ENCODE measurements at regions of chr7 and their contacts with region 1.

Region 1: GRCh38 chr7:36440880-36441279 is 51.2 kb downstream of the ANLN start:
- DNase-seq: peak; percentile 36 to 60 (median 57)
- H3K4me3 ChIP-seq: no peak overlapping the region
- H3K27ac ChIP-seq: no peak overlapping the region
- H3K4me1 ChIP-seq: peaks cover 0 to 6% (median 1%) of the 10 kb centered on the region in 4 experiments
- H3K27me3 ChIP-seq: no peaks in the 10 kb centered on the region

Region 2: GRCh38 chr7:36420307-36420706 is 20.6 kb before region 1 on chr7:
- CTCF ChIA-PET with region 1: interaction called, 13 read pairs
- POLR2A ChIA-PET with region 1: no interaction called
- DNase-seq: no peak
- H3K4me3 ChIP-seq: no peak overlapping the region
- H3K27ac ChIP-seq: no peak overlapping the region
- H3K4me1 ChIP-seq: no peaks in the 10 kb centered on the region
- H3K27me3 ChIP-seq: no peaks in the 10 kb centered on the region

Region 3: DNA sequence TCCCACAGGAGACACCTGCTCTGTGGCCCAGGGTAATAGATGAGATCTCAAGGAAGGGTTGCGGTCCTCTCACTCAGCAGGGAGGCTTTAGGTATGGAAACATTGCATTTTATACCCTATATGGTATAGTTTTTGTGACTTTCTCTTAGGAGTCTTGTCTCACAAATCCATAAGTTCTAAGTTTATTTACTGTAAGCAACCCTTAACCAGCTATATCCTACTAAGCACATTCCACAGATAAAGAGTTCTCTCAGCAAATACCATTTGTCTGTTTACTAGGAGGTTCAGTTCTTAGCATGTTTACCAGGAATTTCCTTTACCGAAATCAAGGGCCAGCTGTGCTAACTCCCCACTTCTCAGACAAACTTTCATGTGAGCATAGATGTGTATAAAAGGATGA is 15.7 kb after region 1 on chr7:
- CTCF ChIA-PET with region 1: interaction called, 19 read pairs
- POLR2A ChIA-PET with region 1: no interaction called
- DNase-seq: no peak
- H3K4me3 ChIP-seq: no peak overlapping the region
- H3K27ac ChIP-seq: no peak overlapping the region
- H3K4me1 ChIP-seq: no peaks in the 10 kb centered on the region
- H3K27me3 ChIP-seq: no peaks in the 10 kb centered on the region

Region 4: DNA sequence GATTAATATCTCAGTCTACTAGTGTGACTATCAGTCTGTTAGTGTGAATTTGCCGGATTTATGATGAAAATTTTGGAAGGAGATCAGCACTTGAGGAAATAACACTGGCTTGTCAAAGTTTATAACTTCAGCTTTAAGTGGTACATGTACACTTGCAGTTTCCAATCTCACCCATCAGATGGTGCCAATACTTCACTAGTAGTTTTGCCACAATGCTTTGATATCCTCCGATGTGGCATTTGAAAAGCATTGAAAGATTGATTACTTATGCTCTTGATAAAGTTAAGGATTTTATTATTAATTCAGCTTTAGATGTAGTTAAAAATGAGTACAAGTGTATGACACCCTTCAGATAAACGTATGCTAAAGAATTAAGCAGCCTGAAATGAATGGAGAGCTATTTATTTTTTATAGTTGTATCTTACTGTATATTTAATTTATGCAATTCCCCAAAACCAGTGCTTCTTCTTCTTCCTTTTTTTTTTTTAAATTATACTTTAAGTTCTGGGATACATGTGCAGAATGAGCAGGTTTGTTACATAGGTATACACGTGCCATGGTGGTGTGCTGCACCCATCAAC is 47.0 kb after region 1 on chr7:
- CTCF ChIA-PET with region 1: interaction called, 29 read pairs
- POLR2A ChIA-PET with region 1: no interaction called
- DNase-seq: peak; percentile 75 to 88 (median 85)
- H3K4me3 ChIP-seq: no peak overlapping the region
- H3K27ac ChIP-seq: no peak overlapping the region
- H3K4me1 ChIP-seq: peaks cover 0 to 8% (median 1%) of the 10 kb centered on the region in 4 experiments
- H3K27me3 ChIP-seq: no peaks in the 10 kb centered on the region

Region 5: DNA sequence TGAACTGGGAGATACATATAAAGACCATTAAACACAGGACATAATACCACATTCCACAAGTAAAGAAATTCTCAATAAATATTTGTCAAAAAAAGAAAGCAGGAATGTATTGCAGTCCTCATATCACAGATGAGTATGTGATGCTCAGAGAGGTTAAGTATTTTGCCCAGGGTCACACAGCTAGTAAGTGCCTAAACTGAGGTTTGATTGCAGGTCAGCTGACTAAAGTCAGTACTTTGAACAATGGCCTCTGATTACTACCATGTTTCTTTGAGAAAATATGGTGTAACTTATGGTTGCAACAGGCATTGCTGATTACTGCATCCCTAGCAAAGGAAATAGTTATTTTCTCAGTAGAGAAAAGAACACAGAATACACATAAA is 740.7 kb after region 1 on chr7:
- CTCF ChIA-PET with region 1: interaction called, 42 read pairs
- POLR2A ChIA-PET with region 1: no interaction called
- DNase-seq: no peak
- H3K4me3 ChIP-seq: no peak overlapping the region
- H3K27ac ChIP-seq: no peak overlapping the region
- H3K4me1 ChIP-seq: peaks cover 0 to 12% (median 4%) of the 10 kb centered on the region in 4 experiments
- H3K27me3 ChIP-seq: no peaks in the 10 kb centered on the region

Measured in common myeloid progenitor, CD34-positive (primary cell).